ENCODE measurements at regions of chr2 and their contacts with region 1.

Region 1: GRCh38 chr2:38875576-38876367 is at the starts of genes DHX57 and MORN2:
- DNase-seq: peak; percentile 61 to 86 (median 81)
- ATAC-seq: peak; percentile 91
- H3K4me3 ChIP-seq: peak within 1 kb of the TSS; percentile 77 to 97
- H3K4me3 Mint-ChIP-seq: peak within 1 kb of the TSS; percentile 92
- H3K27ac ChIP-seq: peak within 1 kb of the TSS; percentile 56 to 89
- H3K27ac Mint-ChIP-seq: peak within 1 kb of the TSS; percentile 92
- H3K4me1 ChIP-seq: peaks cover 13% of the 10 kb centered on the region
- H3K4me1 Mint-ChIP-seq: peaks cover 42% of the 10 kb centered on the region
- H3K27me3 ChIP-seq: no peaks in the 10 kb centered on the region
- H3K27me3 Mint-ChIP-seq: no peaks in the 10 kb centered on the region
- CTCF ChIP-seq: no peak
- total RNA-seq, gene DHX57: 19.7 to 20.1 TPM
- total RNA-seq, gene MORN2: 5.7 to 6.8 TPM

Region 2: GRCh38 chr2:38778687-38779082 is 97.1 kb before region 1 on chr2:
- CTCF ChIA-PET with region 1: no interaction called
- POLR2A ChIA-PET with region 1: no interaction called
- intact Hi-C with region 1: loop called (anchors 1 to 2 kb)
- DNase-seq: no peak
- ATAC-seq: no peak
- H3K4me3 ChIP-seq: peak overlapping the region; percentile 64 to 68
- H3K4me3 Mint-ChIP-seq: peak overlapping the region; percentile 98
- H3K27ac ChIP-seq: peak overlapping the region; percentile 72 to 77
- H3K27ac Mint-ChIP-seq: peak overlapping the region; percentile 99
- H3K4me1 ChIP-seq: peaks cover 6% of the 10 kb centered on the region
- H3K4me1 Mint-ChIP-seq: peaks cover 17% of the 10 kb centered on the region
- H3K27me3 ChIP-seq: peaks cover 0 to 3% of the 10 kb centered on the region in 2 experiments
- H3K27me3 Mint-ChIP-seq: peaks cover 6% of the 10 kb centered on the region
- CTCF ChIP-seq: no peak